Activated T-helper 1 cell treated with anti-CD3 and anti-CD28 coated beads, Interleukin-12 subunit alpha, Interleukin-12 subunit beta, Interleukin-2, Interleukin-4 antibody, amounts not matched to agents 30 ng/mL and 10 ng/mL and 1 ng/mL, durations not matched to agents 14 hours and 24 hours and 36 hours (primary cell): ENCODE measurements at regions of chr12 and their contacts with region 1.

Region 1: GRCh38 chr12:65656904-65657351 is 167.4 kb upstream of the HMGA2 start:
- DNase-seq: no peak
- H3K4me3 Mint-ChIP-seq: no peak overlapping the region
- H3K27ac Mint-ChIP-seq: peak overlapping the region; percentile 15
- H3K4me1 Mint-ChIP-seq: peaks cover 8% of the 10 kb centered on the region
- H3K27me3 Mint-ChIP-seq: no peaks in the 10 kb centered on the region

Region 2: DNA sequence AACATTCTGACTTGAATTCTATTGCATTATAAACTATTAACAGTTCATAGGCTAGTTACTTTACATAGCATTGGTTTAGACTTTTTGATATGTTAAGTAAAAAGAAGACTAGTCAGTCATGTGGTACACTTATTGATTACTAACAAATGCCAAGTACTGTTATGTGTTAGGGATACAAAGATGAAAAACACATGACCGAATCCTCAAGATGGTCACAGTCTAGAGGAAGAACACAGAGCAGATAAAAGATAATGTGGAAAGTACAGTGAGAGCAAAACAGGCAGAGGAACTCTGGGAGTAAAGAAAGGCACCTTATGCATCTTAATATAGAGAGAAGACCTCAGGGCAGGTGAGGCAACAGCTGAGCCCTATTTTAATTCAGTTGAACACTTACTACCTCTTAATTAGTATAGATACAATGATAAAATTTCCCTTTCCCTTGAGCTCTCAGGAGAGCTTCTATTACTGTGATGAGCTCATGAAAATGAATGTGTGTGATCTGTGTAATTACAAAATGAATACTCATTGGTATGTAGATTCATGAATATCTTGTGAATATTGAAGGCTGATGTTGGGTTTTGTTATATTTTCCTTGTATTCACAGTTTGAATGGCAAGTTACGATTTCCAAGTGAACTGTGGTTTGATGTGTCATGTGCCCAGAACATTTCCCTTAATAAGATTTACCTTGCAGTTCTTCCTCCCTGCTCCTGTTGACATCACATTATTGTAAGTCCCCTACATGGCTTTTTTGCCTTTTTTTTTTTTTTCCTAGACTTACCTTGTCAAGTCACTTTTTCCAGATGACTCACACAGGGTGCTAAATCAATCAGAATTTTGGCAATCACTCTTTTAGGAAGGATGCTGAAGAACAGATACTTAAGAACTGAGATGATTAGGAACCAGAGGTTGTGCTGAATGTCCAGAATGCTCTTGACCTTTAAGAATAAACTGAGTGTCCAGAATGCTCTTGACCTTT is 408.0 kb before region 1 on chr12:
- intact Hi-C with region 1: loop called (anchors 10 kb)
- DNase-seq: no peak
- H3K4me3 Mint-ChIP-seq: no peak overlapping the region
- H3K27ac Mint-ChIP-seq: peak overlapping the region; percentile 87
- H3K4me1 Mint-ChIP-seq: peaks cover 15% of the 10 kb centered on the region
- H3K27me3 Mint-ChIP-seq: peaks cover under 1% of the 10 kb centered on the region

Region 3: DNA sequence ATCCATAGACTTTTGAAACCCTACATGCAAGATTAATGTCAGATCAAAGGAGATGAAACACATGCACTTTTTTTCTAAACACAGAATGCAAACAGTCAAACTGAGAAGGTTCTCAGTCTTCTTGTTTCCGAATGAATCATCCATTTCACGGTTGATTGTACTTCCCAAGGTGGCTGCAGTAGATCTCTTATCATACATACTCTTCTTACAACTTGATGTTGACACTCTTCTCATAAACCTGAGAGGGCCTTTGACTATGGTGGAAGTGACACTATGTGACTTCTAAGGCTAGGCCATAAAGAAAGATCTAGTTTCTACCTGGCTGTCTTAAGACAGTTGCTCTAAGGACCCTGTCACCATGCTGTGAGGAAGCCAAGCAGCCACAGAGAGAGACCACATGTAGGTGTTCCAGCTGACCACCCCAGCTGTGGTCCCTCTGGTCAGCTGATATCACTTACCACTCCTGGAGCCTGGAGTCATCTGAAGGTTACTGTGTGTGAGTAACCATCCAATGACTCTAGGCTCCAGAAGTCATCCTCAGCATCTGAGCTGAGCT is 100.1 kb after region 1 on chr12:
- intact Hi-C with region 1: loop called (anchors 2 kb)
- DNase-seq: no peak
- H3K4me3 Mint-ChIP-seq: no peak overlapping the region
- H3K27ac Mint-ChIP-seq: no peak overlapping the region
- H3K4me1 Mint-ChIP-seq: peaks cover 14% of the 10 kb centered on the region
- H3K27me3 Mint-ChIP-seq: peaks cover 16% of the 10 kb centered on the region